Heart right ventricle (tissue), 16 donors: ENCODE measurements at regions of chr14 and their contacts with region 1.

Region 1: DNA sequence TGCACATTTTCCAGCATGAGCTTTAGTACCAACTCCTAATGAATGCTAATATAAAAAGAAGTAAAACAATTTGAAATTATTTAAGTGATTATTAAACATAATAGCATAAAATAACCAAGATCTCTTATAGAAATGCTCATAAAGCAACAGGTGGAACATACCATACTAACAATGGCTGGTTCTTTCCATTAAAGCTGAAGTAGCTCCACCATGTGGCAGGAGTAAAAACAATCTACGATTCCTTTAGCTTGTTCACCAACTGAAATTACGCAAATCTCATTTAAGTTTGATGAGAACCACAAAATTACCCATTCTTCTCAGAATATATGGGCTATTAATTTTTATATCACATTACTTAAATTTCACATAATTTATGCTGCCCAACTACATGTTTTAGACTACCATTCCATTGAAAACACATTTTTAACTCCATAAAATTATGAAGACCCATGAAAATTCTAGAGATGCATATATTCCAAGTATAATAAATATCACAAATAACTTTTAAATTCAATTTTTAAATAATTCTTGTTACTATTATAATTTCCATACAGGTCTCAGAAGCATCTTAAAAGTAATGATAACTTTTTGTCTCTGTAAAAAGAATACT is 213.6 kb downstream of the DAD1 start:
- DNase-seq: no peak
- ATAC-seq: peak in 1 of 8 donors; percentile 42
- H3K4me3 ChIP-seq: no peak overlapping the region
- H3K27ac ChIP-seq: no peak overlapping the region
- H3K4me1 ChIP-seq: peaks cover 0 to 12% (median 1%) of the 10 kb centered on the region in 9 donors
- H3K27me3 ChIP-seq: peaks cover 0 to 10% (median 0%) of the 10 kb centered on the region in 7 donors
- CTCF ChIP-seq: peak; percentile 25 to 79 (median 63)

Region 2: GRCh38 chr14:22221508-22221907 is 153.9 kb before region 1 on chr14:
- intact Hi-C with region 1: loop called in 1 of 10 experiments (anchors 10 kb)
- DNase-seq: no peak
- ATAC-seq: no peak
- H3K4me3 ChIP-seq: no peak overlapping the region
- H3K27ac ChIP-seq: no peak overlapping the region
- H3K4me1 ChIP-seq: peaks cover 0 to 10% (median 0%) of the 10 kb centered on the region in 9 donors
- H3K27me3 ChIP-seq: peaks cover 0 to 26% (median 7%) of the 10 kb centered on the region in 7 donors
- CTCF ChIP-seq: peak in 2 of 9 donors; percentile 28